CD8-positive, alpha-beta memory T cell (primary cell): ENCODE measurements at regions of chr5 and their contacts with region 1.

Region 1: DNA sequence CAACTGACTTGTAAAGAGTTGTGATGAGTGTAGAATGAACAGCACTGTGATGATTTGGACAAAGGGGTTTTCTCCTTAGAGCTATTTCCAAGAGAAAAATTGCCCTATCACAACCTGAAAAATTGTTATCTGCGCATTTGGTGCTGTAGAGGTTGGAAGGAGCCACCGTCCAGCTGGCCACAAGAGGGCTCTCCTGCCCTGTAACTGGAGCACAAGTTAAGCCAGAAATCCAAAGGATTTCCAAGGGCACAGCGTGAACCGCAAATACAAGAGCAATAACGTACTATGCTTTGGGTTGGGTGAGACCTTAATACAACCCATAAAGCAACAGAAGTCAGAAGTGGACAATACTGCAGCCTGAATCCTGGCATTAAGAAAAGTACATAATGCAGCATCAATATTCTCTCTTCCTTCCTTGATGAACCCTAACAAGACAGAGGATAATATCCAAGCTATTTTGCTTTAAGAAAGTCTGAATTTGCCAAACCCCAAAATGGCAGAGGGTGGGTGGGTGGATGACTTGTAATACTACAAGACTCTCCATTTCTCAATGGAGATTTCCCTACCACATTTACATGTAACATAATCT is 56.8 kb upstream of the SMIM32 start:
- DNase-seq: no peak
- H3K4me3 ChIP-seq: no peak overlapping the region
- H3K4me3 Mint-ChIP-seq: no peak overlapping the region
- H3K27ac ChIP-seq: no peak overlapping the region
- H3K27ac Mint-ChIP-seq: no peak overlapping the region
- H3K4me1 ChIP-seq: no peaks in the 10 kb centered on the region
- H3K4me1 Mint-ChIP-seq: no peaks in the 10 kb centered on the region
- H3K27me3 ChIP-seq: no peaks in the 10 kb centered on the region
- H3K27me3 Mint-ChIP-seq: peaks cover 0 to 6% of the 10 kb centered on the region in 2 donors

Region 2: GRCh38 chr5:136769900-136770684 is 520.3 kb after region 1 on chr5:
- CTCF ChIA-PET with region 1: interaction called, 19 read pairs
- POLR2A ChIA-PET with region 1: no interaction called
- DNase-seq: peak in 4 of 5 donors; percentile 4 to 59 (median 7)
- H3K4me3 ChIP-seq: no peak overlapping the region
- H3K4me3 Mint-ChIP-seq: no peak overlapping the region
- H3K27ac ChIP-seq: no peak overlapping the region
- H3K27ac Mint-ChIP-seq: no peak overlapping the region
- H3K4me1 ChIP-seq: no peaks in the 10 kb centered on the region
- H3K4me1 Mint-ChIP-seq: no peaks in the 10 kb centered on the region
- H3K27me3 ChIP-seq: no peaks in the 10 kb centered on the region
- H3K27me3 Mint-ChIP-seq: peaks cover 0 to 1% of the 10 kb centered on the region in 2 donors